GM12878 (cell line): ENCODE measurements at regions of chr10 and their contacts with region 1.

Region 1: GRCh38 chr10:22714479-22715289 is at the start of gene PIP4K2A:
- DNase-seq: no peak
- ATAC-seq: peak; percentile 63
- H3K4me3 ChIP-seq: peak within 1 kb of the TSS; percentile 75
- H3K27ac ChIP-seq: peak within 1 kb of the TSS; percentile 81
- H3K4me1 ChIP-seq: peaks cover 7% of the 10 kb centered on the region
- H3K27me3 ChIP-seq: no peaks in the 10 kb centered on the region
- CTCF ChIP-seq: no peak
- EP300 ChIP-seq: no peak
- POLR2A ChIP-seq: peak; percentile 84
- RAD21 ChIP-seq: no peak
- polyA plus RNA-seq, gene PIP4K2A: 54.3 to 103 TPM

Region 2: DNA sequence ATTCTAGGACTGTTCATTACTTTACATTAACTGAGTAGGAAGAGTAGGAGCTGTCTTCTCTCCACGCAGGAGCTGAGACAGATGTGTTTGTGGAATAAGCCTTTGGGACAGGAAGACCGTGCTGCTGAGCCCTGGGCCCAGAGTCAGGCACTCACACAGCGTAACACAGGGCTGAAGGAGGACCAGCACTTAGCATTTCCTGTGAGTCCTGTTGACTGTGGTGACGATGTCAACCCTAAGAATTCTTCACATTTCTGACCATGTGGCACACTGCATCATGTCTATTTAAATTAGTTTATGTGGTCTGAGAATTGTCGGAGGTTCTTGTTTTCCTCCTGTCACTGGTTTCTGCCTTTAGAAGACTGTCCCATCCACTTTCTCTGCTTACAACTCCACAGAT is 117.5 kb before region 1 on chr10:
- CTCF ChIA-PET with region 1: interaction called, 4 read pairs
- POLR2A ChIA-PET with region 1: interaction called, 5 read pairs
- RAD21 ChIA-PET with region 1: interaction called, 10 read pairs
- SMC1A ChIA-PET with region 1: interaction called, 18 read pairs
- in situ Hi-C with region 1: no loop called
- intact Hi-C with region 1: no loop called
- DNase-seq: peak; percentile 55
- ATAC-seq: peak; percentile 60
- H3K4me3 ChIP-seq: no peak overlapping the region
- H3K27ac ChIP-seq: peak overlapping the region; percentile 68
- H3K4me1 ChIP-seq: peaks cover 49% of the 10 kb centered on the region
- H3K27me3 ChIP-seq: no peaks in the 10 kb centered on the region
- CTCF ChIP-seq: no peak
- EP300 ChIP-seq: no peak
- POLR2A ChIP-seq: peak; percentile 43; the same call in 1 of the 2 replicates
- RAD21 ChIP-seq: no peak

Region 3: DNA sequence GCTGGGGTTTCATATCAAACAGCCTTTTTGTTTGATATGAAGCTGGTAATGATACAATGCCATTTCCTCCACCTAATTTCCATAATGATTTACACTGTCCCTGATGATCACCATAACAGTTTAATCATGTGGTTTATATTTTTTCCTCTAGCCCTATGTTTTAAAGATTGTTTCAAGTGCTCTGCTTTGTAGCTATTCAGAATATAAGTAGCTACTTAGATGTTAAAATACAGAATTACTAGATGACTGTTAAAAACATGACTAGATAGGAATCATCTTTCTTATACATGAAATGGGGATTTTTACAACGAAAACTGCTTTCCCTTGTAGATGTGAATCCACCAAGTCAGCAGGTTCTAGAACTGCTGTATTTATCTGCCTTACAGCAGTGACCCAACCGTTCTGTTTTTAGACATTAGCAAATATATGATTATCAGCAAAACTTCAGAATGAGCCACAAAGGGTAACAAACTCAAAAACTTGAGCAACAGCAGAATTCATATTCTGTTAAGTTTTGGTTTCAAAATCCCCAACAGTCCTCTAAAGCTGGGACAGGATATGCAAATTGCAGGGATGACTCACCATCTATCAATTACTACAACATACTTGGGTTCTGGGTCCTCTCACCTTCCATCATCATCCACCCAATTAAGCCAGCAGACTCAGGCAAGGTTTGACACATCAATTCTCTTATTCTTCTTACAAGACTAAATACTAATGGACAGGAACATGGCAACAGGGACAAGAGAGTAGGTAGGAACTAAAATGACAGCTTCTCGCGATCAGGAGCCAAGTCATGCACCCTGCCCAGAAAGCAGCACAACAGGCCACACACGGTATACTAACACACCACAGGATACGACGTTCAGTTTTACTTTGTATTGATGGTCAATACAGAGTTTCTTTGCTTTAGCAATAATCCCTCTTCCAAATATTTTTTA is 84.2 kb before region 1 on chr10:
- CTCF ChIA-PET with region 1: interaction called, 7 read pairs
- POLR2A ChIA-PET with region 1: interaction called, 10 read pairs
- RAD21 ChIA-PET with region 1: interaction called, 16 read pairs
- SMC1A ChIA-PET with region 1: interaction called, 12 read pairs
- in situ Hi-C with region 1: no loop called
- intact Hi-C with region 1: no loop called
- DNase-seq: peak; percentile 92
- ATAC-seq: peak; percentile 89
- H3K4me3 ChIP-seq: peak overlapping the region; percentile 57
- H3K27ac ChIP-seq: peak overlapping the region; percentile 89
- H3K4me1 ChIP-seq: peaks cover 42% of the 10 kb centered on the region
- H3K27me3 ChIP-seq: no peaks in the 10 kb centered on the region
- CTCF ChIP-seq: no peak
- EP300 ChIP-seq: peak; percentile 70; a peak in 3 of 4 replicates
- POLR2A ChIP-seq: no peak
- RAD21 ChIP-seq: 0 out of 2 replicates have a peak, but pooled peaks have one; percentile 13

Region 4: GRCh38 chr10:22682237-22683139 is 32.2 kb before region 1 on chr10:
- CTCF ChIA-PET with region 1: interaction called, 4 read pairs
- POLR2A ChIA-PET with region 1: interaction called, 13 read pairs
- RAD21 ChIA-PET with region 1: interaction called, 16 read pairs
- SMC1A ChIA-PET with region 1: interaction called, 23 read pairs
- in situ Hi-C with region 1: no loop called
- intact Hi-C with region 1: no loop called
- DNase-seq: peak; percentile 52
- ATAC-seq: peak; percentile 64
- H3K4me3 ChIP-seq: peak overlapping the region; percentile 45; the same call in 1 of the 2 replicates
- H3K27ac ChIP-seq: peak overlapping the region; percentile 82
- H3K4me1 ChIP-seq: peaks cover 43% of the 10 kb centered on the region
- H3K27me3 ChIP-seq: no peaks in the 10 kb centered on the region
- CTCF ChIP-seq: no peak
- EP300 ChIP-seq: no peak
- POLR2A ChIP-seq: no peak
- RAD21 ChIP-seq: no peak

Region 5: GRCh38 chr10:22704471-22704911 is 10.2 kb before region 1 on chr10:
- CTCF ChIA-PET with region 1: interaction called, 8 read pairs
- POLR2A ChIA-PET with region 1: interaction called, 4 read pairs
- RAD21 ChIA-PET with region 1: interaction called, 16 read pairs
- SMC1A ChIA-PET with region 1: interaction called, 16 read pairs
- in situ Hi-C with region 1: no loop called
- intact Hi-C with region 1: no loop called
- DNase-seq: no peak
- ATAC-seq: peak; percentile 53
- H3K4me3 ChIP-seq: peak overlapping the region; percentile 66; the same call in 1 of the 2 replicates
- H3K27ac ChIP-seq: peak overlapping the region; percentile 76
- H3K4me1 ChIP-seq: peaks cover 65% of the 10 kb centered on the region
- H3K27me3 ChIP-seq: no peaks in the 10 kb centered on the region
- CTCF ChIP-seq: no peak
- EP300 ChIP-seq: no peak
- POLR2A ChIP-seq: no peak
- RAD21 ChIP-seq: 0 out of 2 replicates have a peak, but pooled peaks have one; percentile 9